ENCODE measurements at regions of chr18 and their contacts with region 1.

Region 1: GRCh38 chr18:31101183-31102024 is 817 bp downstream of the DSC2 start:
- DNase-seq: peak; percentile 63 to 91 (median 88)
- ATAC-seq: peak; percentile 86 to 92 (median 90)
- H3K4me3 ChIP-seq: peak overlapping the region; percentile 50 to 89 (median 74)
- H3K27ac ChIP-seq: peak overlapping the region; percentile 81 to 94 (median 90)
- H3K4me1 ChIP-seq: peaks cover 0 to 17% (median 0%) of the 10 kb centered on the region in 12 donors
- H3K27me3 ChIP-seq: peaks cover 0 to 3% (median 0%) of the 10 kb centered on the region in 9 donors
- CTCF ChIP-seq: peak in 1 of 12 donors; percentile 19
- POLR2A ChIP-seq: peak in 1 of 2 donors; percentile 21

Region 2: DNA sequence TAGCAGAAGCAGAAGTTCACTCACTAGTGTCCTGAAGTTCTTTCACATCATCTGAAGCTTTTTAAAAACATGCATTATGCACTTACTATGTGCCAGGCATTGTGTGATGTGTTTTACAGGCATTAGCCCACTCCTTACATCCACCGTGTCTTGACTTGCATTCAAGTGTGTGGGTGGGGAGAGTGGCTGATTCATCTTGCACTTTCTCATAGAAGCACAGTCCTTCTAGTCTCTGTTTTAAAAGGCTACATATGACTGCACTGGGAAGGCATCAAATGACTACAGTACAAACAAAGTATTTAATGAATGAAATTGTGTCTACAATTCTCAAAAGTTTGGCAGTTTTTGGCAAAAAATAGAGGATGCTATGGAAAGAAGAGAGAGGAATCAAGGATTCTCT is 37.3 kb before region 1 on chr18:
- intact Hi-C with region 1: loop called in 1 of 10 experiments (anchors 5 kb)
- DNase-seq: no peak
- ATAC-seq: no peak
- H3K4me3 ChIP-seq: no peak overlapping the region
- H3K27ac ChIP-seq: no peak overlapping the region
- H3K4me1 ChIP-seq: no peaks in the 10 kb centered on the region
- H3K27me3 ChIP-seq: peaks cover 0 to 2% (median 0%) of the 10 kb centered on the region in 9 donors
- CTCF ChIP-seq: no peak
- POLR2A ChIP-seq: no peak

Region 3: DNA sequence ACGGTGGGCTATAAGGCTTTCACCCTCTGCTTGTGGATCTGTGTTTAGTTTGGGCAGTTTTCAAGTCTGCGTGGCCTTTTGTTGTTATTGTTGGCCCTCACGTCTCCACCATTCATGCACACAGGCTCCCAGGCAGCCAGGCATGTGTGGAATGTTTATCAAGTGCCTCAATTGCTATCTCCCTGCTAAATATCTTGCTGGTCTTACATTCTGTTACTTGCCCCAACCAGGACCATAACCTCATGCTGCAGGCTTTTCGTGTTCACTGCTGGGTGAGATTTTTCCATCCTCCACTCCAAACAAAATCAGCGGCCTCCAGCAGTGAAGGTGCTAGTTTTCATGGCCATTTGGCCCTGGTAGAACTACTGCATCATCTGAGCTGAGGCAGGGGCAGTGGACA is 124.3 kb after region 1 on chr18:
- intact Hi-C with region 1: loop called in 1 of 10 experiments (anchors 10 kb)
- DNase-seq: peak in 4 of 5 donors; percentile 55 to 84 (median 60)
- ATAC-seq: peak; percentile 90 to 96 (median 94)
- H3K4me3 ChIP-seq: peak overlapping the region in 1 of 12 donors; percentile 4
- H3K27ac ChIP-seq: peak overlapping the region; percentile 69 to 98 (median 84)
- H3K4me1 ChIP-seq: peaks cover 0 to 21% (median 3%) of the 10 kb centered on the region in 12 donors
- H3K27me3 ChIP-seq: no peaks in the 10 kb centered on the region
- CTCF ChIP-seq: no peak
- POLR2A ChIP-seq: no peak

Region 4: GRCh38 chr18:31261792-31262582 is 160.6 kb after region 1 on chr18:
- intact Hi-C with region 1: loop called in 2 of 10 experiments (anchors 5 to 10 kb)
- DNase-seq: no peak
- ATAC-seq: peak in 2 of 4 donors; percentile 61 to 71
- H3K4me3 ChIP-seq: no peak overlapping the region
- H3K27ac ChIP-seq: peak overlapping the region in 2 of 12 donors; percentile 8 to 12
- H3K4me1 ChIP-seq: peaks cover 0 to 7% (median 0%) of the 10 kb centered on the region in 12 donors
- H3K27me3 ChIP-seq: no peaks in the 10 kb centered on the region
- CTCF ChIP-seq: no peak
- POLR2A ChIP-seq: no peak

Region 5: GRCh38 chr18:31274915-31275314 is 173.5 kb after region 1 on chr18:
- intact Hi-C with region 1: loop called in 1 of 10 experiments (anchors 10 kb)
- DNase-seq: peak in 4 of 5 donors; percentile 56 to 72 (median 66)
- ATAC-seq: peak; percentile 66 to 89 (median 74)
- H3K4me3 ChIP-seq: peak overlapping the region in 2 of 12 donors; percentile 0 to 1
- H3K27ac ChIP-seq: peak overlapping the region; percentile 8 to 71 (median 39)
- H3K4me1 ChIP-seq: peaks cover 0 to 31% (median 20%) of the 10 kb centered on the region in 12 donors
- H3K27me3 ChIP-seq: no peaks in the 10 kb centered on the region
- CTCF ChIP-seq: no peak
- POLR2A ChIP-seq: no peak

Region 6: DNA sequence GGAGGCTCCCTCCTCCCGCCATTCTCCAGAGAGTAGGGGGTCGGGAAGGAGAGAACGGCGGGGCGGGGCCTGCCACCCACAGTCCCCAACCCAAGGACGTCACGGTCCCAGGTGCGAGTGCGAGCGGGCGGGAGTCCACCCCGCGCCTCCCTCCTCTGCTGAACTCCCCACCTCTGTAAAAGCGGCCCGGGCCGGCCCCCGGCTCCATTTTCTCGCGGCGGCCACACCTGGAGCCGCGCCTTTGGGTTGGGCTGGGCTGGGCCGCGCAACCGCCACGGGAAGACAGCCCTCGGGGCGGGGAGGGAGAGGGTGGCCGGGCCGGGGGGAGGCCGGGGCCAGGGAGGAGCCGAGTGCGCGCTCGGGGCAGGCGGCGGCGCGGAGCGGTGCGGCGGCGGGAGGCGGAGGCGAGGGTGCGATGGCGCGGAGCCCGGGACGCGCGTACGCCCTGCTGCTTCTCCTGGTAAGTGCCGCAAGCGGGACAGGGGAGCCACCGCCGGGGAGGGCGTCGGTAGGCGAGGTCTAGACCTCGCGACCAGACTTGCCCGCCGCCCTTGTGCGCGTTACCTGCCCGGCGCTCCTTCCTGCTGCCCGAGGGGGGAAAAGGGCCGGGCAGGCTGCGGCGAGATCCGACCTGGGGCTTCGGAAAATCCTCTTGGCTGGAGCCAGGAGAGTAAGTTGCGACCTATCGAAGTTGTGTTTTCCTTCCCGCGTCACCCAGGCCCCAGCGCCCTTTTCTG is 396.6 kb after region 1 on chr18 and contains the start of gene DSG2:
- intact Hi-C with region 1: loop called in 7 of 10 experiments (anchors 2 to 10 kb)
- DNase-seq: peak; percentile 62 to 79 (median 78)
- ATAC-seq: peak; percentile 90 to 97 (median 96)
- H3K4me3 ChIP-seq: peak within 1 kb of the TSS; percentile 52 to 76 (median 68)
- H3K27ac ChIP-seq: peak within 1 kb of the TSS; percentile 52 to 84 (median 71)
- H3K4me1 ChIP-seq: peaks cover 0 to 19% (median 0%) of the 10 kb centered on the region in 12 donors
- H3K27me3 ChIP-seq: peaks cover 0 to 30% (median 0%) of the 10 kb centered on the region in 9 donors
- CTCF ChIP-seq: no peak
- POLR2A ChIP-seq: no peak
- total RNA-seq, gene DSG2: 36.0 to 54.4 (median 41.4) TPM

Region 7: GRCh38 chr18:31512203-31512764 is 410.9 kb after region 1 on chr18:
- intact Hi-C with region 1: loop called in 3 of 10 experiments (anchors 5 to 10 kb)
- DNase-seq: no peak
- ATAC-seq: peak in 3 of 4 donors; percentile 60 to 69 (median 62)
- H3K4me3 ChIP-seq: no peak overlapping the region
- H3K27ac ChIP-seq: no peak overlapping the region
- H3K4me1 ChIP-seq: peaks cover 0 to 18% (median 0%) of the 10 kb centered on the region in 12 donors
- H3K27me3 ChIP-seq: no peaks in the 10 kb centered on the region
- CTCF ChIP-seq: no peak
- POLR2A ChIP-seq: no peak

Measured in heart left ventricle (tissue), 16 donors.